Esophagus squamous epithelium (tissue), 5 donors: ENCODE measurements at regions of chr12 and their contacts with region 1.

Region 1: DNA sequence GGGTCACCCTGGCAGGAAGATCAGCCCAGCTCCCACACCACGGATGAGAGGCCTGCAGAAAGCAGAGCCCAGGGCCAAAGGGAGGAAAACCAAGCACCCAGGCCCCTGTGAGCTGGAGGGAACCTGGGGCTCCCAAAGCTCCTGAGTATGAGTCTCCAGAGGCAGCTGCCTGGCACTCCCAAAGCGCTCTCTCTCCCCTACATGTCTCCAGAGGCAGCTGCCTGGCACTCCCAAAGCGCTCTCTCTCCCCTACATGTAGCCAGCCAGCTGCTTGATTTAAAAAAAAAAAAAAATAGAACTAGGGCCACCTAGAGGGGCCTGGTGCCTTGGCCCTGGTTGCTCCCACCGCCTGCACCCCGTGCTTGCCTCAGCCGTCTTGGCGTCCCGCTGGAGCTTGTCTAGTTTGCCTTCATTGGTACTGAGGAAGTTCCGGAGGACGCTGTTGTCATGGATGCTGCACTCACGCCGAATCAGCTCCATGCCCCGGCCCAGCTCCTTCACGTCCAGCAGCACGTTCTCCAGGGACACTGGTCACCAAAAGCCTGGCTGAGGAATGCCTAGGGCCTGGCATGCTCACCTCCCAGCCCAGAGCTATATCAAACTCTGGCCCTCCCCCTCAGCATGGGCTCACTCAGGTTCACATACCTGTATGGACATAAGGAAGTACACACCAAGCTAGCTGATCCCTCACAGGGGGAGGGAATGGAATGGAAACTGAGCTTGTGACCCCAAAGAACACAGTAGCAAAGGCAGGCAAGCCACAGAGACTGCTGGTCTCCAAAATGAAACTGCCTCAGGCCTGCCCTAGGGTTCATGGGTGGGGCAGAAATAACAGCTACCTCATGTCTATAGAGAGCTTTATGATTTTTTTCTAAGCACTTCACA is 24.7 kb downstream of the PRPF40B start:
- DNase-seq: no peak
- H3K4me3 ChIP-seq: no peak overlapping the region
- H3K27ac ChIP-seq: peak overlapping the region in 2 of 4 donors; percentile 39 to 58
- H3K4me1 ChIP-seq: peaks cover 0 to 59% (median 21%) of the 10 kb centered on the region in 3 donors
- H3K27me3 ChIP-seq: no peaks in the 10 kb centered on the region
- CTCF ChIP-seq: no peak
- POLR2A ChIP-seq: no peak

Region 2: GRCh38 chr12:49515266-49515665 is 132.8 kb before region 1 on chr12:
- intact Hi-C with region 1: no loop called
- DNase-seq: no peak
- H3K4me3 ChIP-seq: no peak overlapping the region
- H3K27ac ChIP-seq: no peak overlapping the region
- H3K4me1 ChIP-seq: no peaks in the 10 kb centered on the region
- H3K27me3 ChIP-seq: no peaks in the 10 kb centered on the region
- CTCF ChIP-seq: no peak
- POLR2A ChIP-seq: no peak

Region 3: GRCh38 chr12:49578471-49579112 is 69.5 kb before region 1 on chr12:
- intact Hi-C with region 1: no loop called
- DNase-seq: no peak
- H3K4me3 ChIP-seq: no peak overlapping the region
- H3K27ac ChIP-seq: no peak overlapping the region
- H3K4me1 ChIP-seq: peaks cover 0 to 23% (median 9%) of the 10 kb centered on the region in 3 donors
- H3K27me3 ChIP-seq: no peaks in the 10 kb centered on the region
- CTCF ChIP-seq: no peak
- POLR2A ChIP-seq: no peak

Region 4: DNA sequence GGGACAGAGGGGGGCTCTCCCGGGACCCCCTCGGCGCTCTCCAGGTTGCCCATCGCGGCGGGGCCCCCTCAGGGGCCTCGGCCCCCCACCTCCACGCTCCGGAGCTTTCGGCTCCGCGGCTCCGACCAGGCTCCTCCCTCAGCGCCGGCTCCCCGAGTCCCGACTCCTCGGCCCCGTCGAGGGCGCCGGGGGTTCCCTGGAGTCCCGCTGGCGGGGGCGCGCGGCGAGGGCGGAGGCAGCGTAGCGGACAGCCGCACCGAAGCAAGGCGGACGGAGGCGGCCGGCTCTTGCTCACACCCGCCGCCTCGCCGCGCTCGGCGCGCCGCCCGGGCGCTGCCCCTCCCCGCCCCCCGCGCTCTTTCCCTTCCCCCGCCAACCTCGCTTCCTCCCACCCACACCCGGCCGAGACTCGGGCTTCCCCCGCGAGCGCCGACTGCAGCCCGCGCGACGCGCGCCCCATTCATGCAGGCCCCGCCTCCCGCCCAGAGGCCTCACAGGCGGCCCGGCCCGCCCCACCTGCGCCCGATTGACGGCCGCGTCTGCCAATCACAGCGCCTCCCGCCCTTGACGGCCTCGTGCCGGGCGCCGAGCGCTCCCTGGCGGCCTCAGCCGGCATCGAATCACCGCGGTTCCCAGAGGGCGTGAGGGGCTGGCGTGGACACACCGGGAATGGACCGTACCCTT is 59.2 kb after region 1 on chr12 and contains the start of gene FMNL3:
- intact Hi-C with region 1: loop called (anchors 5 kb)
- DNase-seq: peak; percentile 86
- H3K4me3 ChIP-seq: peak within 1 kb of the TSS; percentile 58 to 87 (median 69)
- H3K27ac ChIP-seq: peak within 1 kb of the TSS; percentile 81 to 93 (median 85)
- H3K4me1 ChIP-seq: peaks cover 3 to 51% (median 6%) of the 10 kb centered on the region in 3 donors
- H3K27me3 ChIP-seq: peaks cover 0 to 19% (median 0%) of the 10 kb centered on the region in 4 donors
- CTCF ChIP-seq: peak; percentile 92 to 99 (median 98)
- POLR2A ChIP-seq: peak in 2 of 4 donors; percentile 51 to 60
- total RNA-seq, gene FMNL3: 5.2 to 7.6 (median 5.8) TPM

Region 5: GRCh38 chr12:50055831-50056638 is 408.0 kb after region 1 on chr12:
- intact Hi-C with region 1: no loop called
- DNase-seq: no peak
- H3K4me3 ChIP-seq: peak overlapping the region in 2 of 4 donors; percentile 13 to 37
- H3K27ac ChIP-seq: no peak overlapping the region
- H3K4me1 ChIP-seq: peaks cover 18 to 34% (median 21%) of the 10 kb centered on the region in 3 donors
- H3K27me3 ChIP-seq: peaks cover 0 to 71% (median 0%) of the 10 kb centered on the region in 4 donors
- CTCF ChIP-seq: peak; percentile 78 to 94 (median 88)
- POLR2A ChIP-seq: no peak